ENCODE measurements at regions of chr18 and their contacts with region 1.

Region 1: GRCh38 chr18:45722899-45723298 is 1.1 kb upstream of the SLC14A1 start:
- DNase-seq: peak; percentile 60 to 70
- ATAC-seq: peak; percentile 98 to 99
- H3K4me3 ChIP-seq: no peak overlapping the region
- H3K27ac ChIP-seq: no peak overlapping the region
- H3K4me1 ChIP-seq: no peaks in the 10 kb centered on the region
- CTCF ChIP-seq: peak; percentile 55
- EP300 ChIP-seq: no peak
- POLR2A ChIP-seq: no peak
- RAD21 ChIP-seq: peak; percentile 75

Region 2: DNA sequence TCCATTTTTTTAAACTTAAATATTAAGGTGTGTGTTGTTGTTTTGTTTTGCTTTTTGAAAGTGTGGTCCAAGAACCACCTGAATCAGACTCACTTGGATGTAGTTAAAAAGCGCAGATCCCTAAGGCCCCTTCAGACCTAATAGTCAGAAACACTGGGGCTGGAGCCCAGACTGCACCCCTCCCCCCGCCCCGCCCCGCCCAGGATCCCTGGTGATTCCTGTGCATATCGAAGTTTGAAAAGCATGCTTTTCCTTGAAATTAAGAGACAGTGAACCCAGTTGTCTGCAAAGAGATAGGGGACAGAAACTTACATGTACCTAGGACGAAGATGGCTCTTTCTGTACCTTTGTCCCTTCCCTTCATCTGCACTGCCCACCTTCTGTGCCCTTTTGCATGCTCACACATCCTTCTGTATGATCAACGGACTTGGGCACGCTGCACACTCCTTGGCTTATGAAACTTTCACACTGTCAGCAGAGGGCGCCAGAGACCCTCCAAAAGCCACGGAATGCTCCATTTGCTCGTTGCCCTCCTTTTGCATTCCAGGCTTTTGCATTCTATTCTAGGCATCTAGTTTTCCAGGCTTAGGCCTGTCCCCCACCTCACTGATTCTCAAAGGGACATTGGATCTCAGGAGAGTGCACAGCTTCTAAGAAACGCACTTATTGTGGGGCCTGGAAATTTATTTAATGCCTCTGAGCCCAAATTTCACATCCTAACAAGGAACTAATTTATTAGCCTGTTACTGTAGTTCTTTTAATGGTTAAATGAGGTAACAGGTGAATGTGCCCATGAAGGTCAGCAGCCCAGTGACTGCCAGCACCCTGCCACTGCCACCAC is 31.7 kb before region 1 on chr18:
- CTCF ChIA-PET with region 1: interaction called, 17 read pairs
- POLR2A ChIA-PET with region 1: no interaction called
- DNase-seq: peak; percentile 31 to 69
- ATAC-seq: peak; percentile 93 to 97
- H3K4me3 ChIP-seq: no peak overlapping the region
- H3K27ac ChIP-seq: no peak overlapping the region
- H3K4me1 ChIP-seq: no peaks in the 10 kb centered on the region
- CTCF ChIP-seq: peak; percentile 79
- EP300 ChIP-seq: no peak
- POLR2A ChIP-seq: no peak
- RAD21 ChIP-seq: peak; percentile 87 to 95

Region 3: GRCh38 chr18:45839414-45840395 is 116.8 kb after region 1 on chr18:
- CTCF ChIA-PET with region 1: interaction called, 76 read pairs
- POLR2A ChIA-PET with region 1: no interaction called
- DNase-seq: peak in 1 of 2 experiments; percentile 63
- ATAC-seq: peak; percentile 80 to 90
- H3K4me3 ChIP-seq: no peak overlapping the region
- H3K27ac ChIP-seq: no peak overlapping the region
- H3K4me1 ChIP-seq: 0 out of 3 replicates have a peak, but pooled peaks cover 2% of the 10 kb centered on the region
- CTCF ChIP-seq: peak; percentile 44
- EP300 ChIP-seq: no peak
- POLR2A ChIP-seq: no peak
- RAD21 ChIP-seq: peak; percentile 59 to 68

Region 4: DNA sequence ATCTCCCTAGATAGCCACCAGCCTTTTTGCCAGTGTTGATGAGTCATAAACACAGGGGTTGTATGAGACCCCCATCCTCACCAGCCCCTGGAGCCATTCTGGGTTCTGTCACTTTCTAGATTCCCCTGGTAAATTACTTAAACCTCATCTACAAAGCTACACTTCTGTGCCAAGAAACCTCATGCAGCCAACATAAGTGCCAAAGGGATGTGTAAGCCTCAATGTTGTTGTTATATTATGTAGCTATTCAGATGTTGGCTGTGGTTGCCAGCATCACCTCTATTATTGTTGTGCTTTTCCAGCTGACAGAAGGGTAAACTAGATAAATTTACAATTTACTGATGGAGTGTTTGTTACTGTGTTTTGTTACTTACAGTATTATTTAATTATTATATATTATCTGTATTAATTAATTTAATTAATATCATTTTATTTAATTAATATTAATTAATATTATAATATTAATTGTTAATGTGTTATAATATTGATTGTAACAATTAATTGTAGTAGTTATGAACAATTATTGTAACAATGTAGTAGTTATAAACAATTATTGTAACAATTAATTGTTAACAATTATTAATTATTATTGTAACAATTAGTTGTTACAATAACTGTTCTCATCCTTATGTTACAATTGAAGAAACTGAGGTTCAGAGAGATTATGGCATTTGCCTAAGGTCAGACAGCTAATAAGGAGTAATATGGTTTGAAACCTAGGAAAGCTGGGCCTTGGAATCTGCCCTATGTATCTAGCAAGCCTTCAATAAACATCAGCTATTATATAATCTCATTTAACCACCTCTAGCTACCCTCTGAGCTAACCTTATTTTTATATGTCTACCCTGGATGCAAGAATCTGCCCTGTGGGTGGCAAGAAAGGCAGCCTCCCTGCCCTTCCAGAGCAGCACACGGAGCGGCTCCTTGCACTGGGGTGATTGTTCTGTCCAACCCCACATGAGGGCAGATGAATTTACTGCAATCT is 313.1 kb after region 1 on chr18:
- CTCF ChIA-PET with region 1: no interaction called
- POLR2A ChIA-PET with region 1: no interaction called
- DNase-seq: no peak
- ATAC-seq: no peak
- H3K4me3 ChIP-seq: no peak overlapping the region
- H3K27ac ChIP-seq: no peak overlapping the region
- H3K4me1 ChIP-seq: no peaks in the 10 kb centered on the region
- CTCF ChIP-seq: no peak
- EP300 ChIP-seq: no peak
- POLR2A ChIP-seq: no peak
- RAD21 ChIP-seq: no peak